ENCODE measurements at regions of chr1 and their contacts with region 1.

Region 1: DNA sequence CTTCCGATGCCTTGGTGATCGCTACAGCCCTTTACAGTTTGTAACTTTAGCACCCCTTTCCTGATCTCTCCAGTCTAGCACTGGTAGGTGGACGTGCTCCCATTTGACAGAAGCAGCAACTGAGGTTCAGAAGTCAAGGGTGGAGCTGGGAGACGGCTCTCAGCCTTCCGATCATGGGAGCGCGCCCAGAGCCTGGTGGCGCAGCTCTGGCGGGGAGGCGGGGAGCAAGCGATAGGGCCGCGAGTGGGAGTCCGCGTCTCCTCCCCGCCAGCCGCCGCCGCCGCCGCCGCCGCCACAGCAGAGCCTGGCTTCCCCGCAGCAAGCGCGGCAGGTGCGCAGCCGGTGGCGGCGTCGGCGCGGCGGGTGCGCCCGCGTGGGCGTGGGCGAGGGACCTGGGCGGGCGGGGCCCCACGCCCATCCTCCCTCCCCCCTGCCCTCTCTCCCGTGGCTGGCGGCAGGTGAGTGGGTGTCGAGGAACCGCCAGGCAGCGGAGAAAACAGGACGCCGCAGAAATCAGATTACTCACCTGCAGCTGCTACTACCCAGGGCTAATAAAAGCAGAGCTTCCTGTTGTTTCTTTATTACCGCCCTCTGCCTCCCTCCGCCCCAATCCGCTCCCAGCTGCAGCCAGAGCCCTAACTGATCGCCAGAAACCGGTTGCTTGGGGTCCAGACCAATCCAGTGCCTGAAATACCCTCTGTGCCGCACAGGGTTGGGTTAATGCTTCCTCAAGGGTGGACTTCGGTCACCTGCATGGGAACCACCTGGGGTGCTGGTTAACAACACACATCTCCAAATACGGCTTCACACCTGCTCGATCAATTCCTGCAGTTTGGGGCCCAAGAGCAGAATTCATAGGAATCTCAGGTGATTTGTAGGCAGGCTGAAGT is 60.2 kb upstream of the ID3 start:
- DNase-seq: peak; percentile 87 to 94 (median 90)
- H3K4me3 ChIP-seq: peak overlapping the region; percentile 47 to 58
- H3K4me3 Mint-ChIP-seq: peak overlapping the region; percentile 81 to 88 (median 84)
- H3K27ac ChIP-seq: peak overlapping the region; percentile 65
- H3K27ac Mint-ChIP-seq: peak overlapping the region; percentile 92 to 98 (median 95)
- H3K4me1 ChIP-seq: peaks cover 88% of the 10 kb centered on the region
- H3K4me1 Mint-ChIP-seq: peaks cover 62 to 95% (median 77%) of the 10 kb centered on the region in 4 donors
- H3K27me3 ChIP-seq: no peaks in the 10 kb centered on the region
- H3K27me3 Mint-ChIP-seq: no peaks in the 10 kb centered on the region

Region 2: GRCh38 chr1:23344111-23344986 is 275.2 kb before region 1 on chr1 and contains the start of gene HNRNPR:
- CTCF ChIA-PET with region 1: no interaction called
- POLR2A ChIA-PET with region 1: no interaction called
- intact Hi-C with region 1: loop called (anchors 1 kb)
- DNase-seq: peak; percentile 96 to 99 (median 98)
- H3K4me3 ChIP-seq: peak within 1 kb of the TSS; percentile 79 to 89
- H3K4me3 Mint-ChIP-seq: peak within 1 kb of the TSS; percentile 92 to 99 (median 98)
- H3K27ac ChIP-seq: peak within 1 kb of the TSS; percentile 75
- H3K27ac Mint-ChIP-seq: peak within 1 kb of the TSS; percentile 93 to 99 (median 96)
- H3K4me1 ChIP-seq: peaks cover 42% of the 10 kb centered on the region
- H3K4me1 Mint-ChIP-seq: peaks cover 35 to 53% (median 42%) of the 10 kb centered on the region in 4 donors
- H3K27me3 ChIP-seq: no peaks in the 10 kb centered on the region
- H3K27me3 Mint-ChIP-seq: no peaks in the 10 kb centered on the region
- total RNA-seq, gene HNRNPR: 115 to 124 TPM

Region 3: GRCh38 chr1:23477344-23477743 is 142.2 kb before region 1 on chr1:
- CTCF ChIA-PET with region 1: no interaction called
- POLR2A ChIA-PET with region 1: no interaction called
- intact Hi-C with region 1: no loop called
- DNase-seq: no peak
- H3K4me3 ChIP-seq: no peak overlapping the region
- H3K4me3 Mint-ChIP-seq: no peak overlapping the region
- H3K27ac ChIP-seq: no peak overlapping the region
- H3K27ac Mint-ChIP-seq: no peak overlapping the region
- H3K4me1 ChIP-seq: no peaks in the 10 kb centered on the region
- H3K4me1 Mint-ChIP-seq: peaks cover 0 to 1% (median under 1%) of the 10 kb centered on the region in 4 donors
- H3K27me3 ChIP-seq: no peaks in the 10 kb centered on the region
- H3K27me3 Mint-ChIP-seq: peaks cover 3 to 8% of the 10 kb centered on the region in 2 donors

Region 4: DNA sequence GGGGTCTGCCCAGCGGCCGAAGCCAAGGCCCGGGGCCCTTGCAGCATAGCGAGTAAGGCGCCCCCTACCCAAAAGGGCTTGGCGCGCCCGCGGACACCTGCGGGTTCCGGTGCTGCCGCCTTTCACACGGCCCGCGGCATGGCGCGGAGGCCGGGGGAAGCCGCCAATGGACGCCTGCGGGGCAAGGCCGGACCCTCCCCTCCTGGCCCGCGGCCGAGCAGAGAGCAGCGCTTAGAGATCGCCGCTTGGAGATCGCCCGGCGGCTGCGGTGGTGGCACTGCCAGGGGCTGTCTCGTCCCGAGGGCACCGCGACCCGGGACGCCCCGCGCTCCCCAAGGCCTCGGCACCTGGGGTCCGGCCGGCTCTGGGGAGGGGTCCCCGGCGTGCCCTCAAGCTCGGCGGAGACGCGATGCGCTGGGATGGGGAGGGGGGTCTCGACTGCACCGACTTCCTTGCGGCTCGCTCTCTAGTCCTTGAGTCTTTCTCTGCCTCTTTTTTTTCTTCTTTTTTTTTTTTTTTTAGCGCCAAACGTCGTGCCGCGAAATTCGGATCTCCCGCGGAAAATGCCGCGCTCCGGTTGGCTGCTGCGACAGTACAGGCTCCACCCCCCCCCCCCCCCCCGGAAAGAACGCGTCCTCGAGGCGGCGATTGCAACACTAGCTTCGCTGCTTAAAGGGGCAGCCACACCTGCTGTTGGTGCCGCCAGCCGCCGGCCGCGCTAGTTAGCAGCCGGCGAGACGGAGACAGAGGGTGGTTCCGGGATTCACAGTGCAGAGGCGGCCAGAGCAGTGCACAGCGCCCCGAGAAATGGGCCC is 88.6 kb before region 1 on chr1 and contains the start of gene E2F2:
- CTCF ChIA-PET with region 1: interaction called, 6 read pairs
- POLR2A ChIA-PET with region 1: interaction called, 69 read pairs
- intact Hi-C with region 1: no loop called
- DNase-seq: peak; percentile 78 to 86 (median 82)
- H3K4me3 ChIP-seq: peak within 1 kb of the TSS; percentile 40 to 64
- H3K4me3 Mint-ChIP-seq: peak within 1 kb of the TSS; percentile 90 to 96 (median 92)
- H3K27ac ChIP-seq: peak within 1 kb of the TSS; percentile 60
- H3K27ac Mint-ChIP-seq: peak within 1 kb of the TSS; percentile 86 to 97 (median 94)
- H3K4me1 ChIP-seq: peaks cover 82% of the 10 kb centered on the region
- H3K4me1 Mint-ChIP-seq: peaks cover 58 to 90% (median 80%) of the 10 kb centered on the region in 4 donors
- H3K27me3 ChIP-seq: no peaks in the 10 kb centered on the region
- H3K27me3 Mint-ChIP-seq: no peaks in the 10 kb centered on the region
- total RNA-seq, gene E2F2: 1.1 to 1.2 TPM

Region 5: DNA sequence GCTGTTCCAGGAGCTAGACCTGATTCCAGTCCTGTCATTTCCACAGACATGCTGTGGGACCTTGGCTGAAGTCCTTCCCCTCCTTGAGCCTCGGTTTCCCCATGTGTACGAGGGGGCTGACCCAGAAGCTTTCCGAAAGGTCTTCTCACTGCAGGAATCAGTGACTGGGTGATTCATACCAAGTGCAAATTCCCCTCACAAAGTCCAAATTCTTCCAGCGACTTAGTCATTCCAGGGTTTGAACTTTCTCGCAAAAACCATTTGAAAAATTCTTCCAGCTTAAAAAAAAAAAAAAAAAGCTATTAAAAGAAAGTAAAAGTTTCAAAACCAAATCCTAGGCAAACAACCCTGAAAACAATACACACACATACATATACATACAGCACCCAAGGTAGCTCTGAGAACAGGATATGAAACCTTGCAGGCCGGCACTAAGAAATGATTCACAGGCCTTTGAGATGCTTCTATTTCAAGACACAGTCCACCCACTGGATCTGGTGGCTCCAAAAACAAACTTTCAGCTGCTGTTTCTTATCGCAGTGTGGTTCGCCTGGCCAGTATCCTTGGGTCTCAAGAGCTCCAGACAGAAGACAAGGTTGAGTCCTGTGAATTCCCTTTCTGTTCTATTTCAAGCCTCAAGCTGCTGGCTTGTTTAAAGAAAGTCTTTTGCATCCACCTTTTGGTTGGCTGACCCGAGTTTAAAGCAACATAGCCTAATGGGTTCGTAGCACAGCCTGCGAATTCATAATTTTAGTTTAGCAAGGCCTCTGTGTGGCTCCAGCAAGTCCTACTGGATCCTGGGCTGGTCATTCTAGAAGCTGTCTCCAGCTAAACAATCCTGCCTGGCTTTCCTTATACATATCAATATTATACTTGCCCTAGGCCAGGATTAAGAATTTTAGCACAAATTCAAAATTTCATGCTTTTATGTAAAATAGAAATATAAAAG is 42.2 kb before region 1 on chr1:
- CTCF ChIA-PET with region 1: interaction called, 4 read pairs
- POLR2A ChIA-PET with region 1: interaction called, 29 read pairs
- intact Hi-C with region 1: no loop called
- DNase-seq: no peak
- H3K4me3 ChIP-seq: no peak overlapping the region
- H3K4me3 Mint-ChIP-seq: peak overlapping the region in 3 of 8 donors; percentile 36 to 46 (median 38)
- H3K27ac ChIP-seq: no peak overlapping the region
- H3K27ac Mint-ChIP-seq: peak overlapping the region; percentile 4 to 86 (median 54)
- H3K4me1 ChIP-seq: peaks cover 25% of the 10 kb centered on the region
- H3K4me1 Mint-ChIP-seq: peaks cover 13 to 27% (median 20%) of the 10 kb centered on the region in 4 donors
- H3K27me3 ChIP-seq: no peaks in the 10 kb centered on the region
- H3K27me3 Mint-ChIP-seq: no peaks in the 10 kb centered on the region

Region 6: DNA sequence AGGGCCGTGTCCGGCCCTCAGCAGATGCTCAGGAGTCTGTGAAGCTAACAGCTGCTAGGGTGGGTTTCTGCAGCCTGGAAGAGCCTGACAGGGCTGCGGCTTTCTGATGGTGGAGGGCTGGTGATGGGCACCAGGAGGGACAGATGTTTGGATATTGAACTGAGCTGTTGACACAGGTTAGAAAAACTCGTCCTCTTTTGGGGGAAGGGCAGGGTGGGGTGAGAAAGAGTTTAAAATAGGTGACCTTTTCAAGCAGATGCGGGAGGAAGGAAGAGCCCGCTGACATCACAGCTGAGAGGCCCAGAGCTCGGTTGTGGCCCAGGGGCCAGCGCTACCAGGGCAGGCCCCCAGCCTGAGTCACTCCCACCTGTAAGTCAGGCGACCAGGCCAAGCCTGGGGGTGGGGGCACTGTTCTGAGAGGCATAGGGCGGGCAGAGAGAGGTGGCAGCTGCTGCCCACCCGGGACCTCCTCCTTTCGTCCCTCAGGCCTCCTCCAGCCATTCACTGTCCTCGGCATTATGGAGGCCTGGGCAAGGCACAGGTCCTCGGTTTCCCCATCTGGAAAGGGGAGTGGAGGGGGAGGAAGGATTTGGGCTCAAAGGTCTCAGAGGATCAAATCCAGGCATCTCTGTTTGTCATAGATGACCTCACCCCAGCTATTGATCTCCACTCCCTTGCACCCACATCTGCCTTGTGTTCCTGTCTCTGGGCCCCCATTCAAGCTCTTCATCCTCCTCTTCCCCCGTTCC is 27.9 kb before region 1 on chr1:
- CTCF ChIA-PET with region 1: interaction called, 8 read pairs
- POLR2A ChIA-PET with region 1: interaction called, 236 read pairs
- intact Hi-C with region 1: no loop called
- DNase-seq: no peak
- H3K4me3 ChIP-seq: no peak overlapping the region
- H3K4me3 Mint-ChIP-seq: peak overlapping the region in 6 of 8 donors; percentile 25 to 75 (median 64)
- H3K27ac ChIP-seq: no peak overlapping the region
- H3K27ac Mint-ChIP-seq: peak overlapping the region in 6 of 7 donors; percentile 82 to 90 (median 88)
- H3K4me1 ChIP-seq: peaks cover 54% of the 10 kb centered on the region
- H3K4me1 Mint-ChIP-seq: peaks cover 25 to 71% (median 52%) of the 10 kb centered on the region in 4 donors
- H3K27me3 ChIP-seq: no peaks in the 10 kb centered on the region
- H3K27me3 Mint-ChIP-seq: no peaks in the 10 kb centered on the region

Region 7: DNA sequence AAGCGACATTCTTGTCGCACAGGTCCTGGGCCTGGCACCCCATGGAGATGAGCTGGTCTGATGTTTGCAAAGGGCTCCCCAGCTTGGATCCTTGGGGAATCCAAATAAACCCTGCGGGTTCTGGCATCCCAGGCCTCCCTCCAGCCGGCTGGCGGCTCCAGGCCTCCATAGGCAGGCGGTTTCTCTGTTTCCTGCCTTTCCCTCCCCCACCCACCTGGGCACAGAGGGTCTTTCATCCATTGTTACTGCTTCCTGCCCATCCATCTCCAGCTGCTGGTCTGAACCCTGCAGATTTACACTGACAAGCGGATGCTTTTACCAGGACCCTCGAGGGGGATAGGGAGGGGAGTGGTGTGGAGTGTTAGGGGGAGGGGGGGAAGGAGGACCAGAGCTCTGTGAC is 21.1 kb before region 1 on chr1:
- CTCF ChIA-PET with region 1: interaction called, 13 read pairs
- POLR2A ChIA-PET with region 1: interaction called, 236 read pairs
- intact Hi-C with region 1: loop called (anchors 1 kb)
- DNase-seq: no peak
- H3K4me3 ChIP-seq: no peak overlapping the region
- H3K4me3 Mint-ChIP-seq: no peak overlapping the region
- H3K27ac ChIP-seq: no peak overlapping the region
- H3K27ac Mint-ChIP-seq: peak overlapping the region in 3 of 7 donors; percentile 25 to 88 (median 40)
- H3K4me1 ChIP-seq: peaks cover 90% of the 10 kb centered on the region
- H3K4me1 Mint-ChIP-seq: peaks cover 48 to 95% (median 80%) of the 10 kb centered on the region in 4 donors
- H3K27me3 ChIP-seq: no peaks in the 10 kb centered on the region
- H3K27me3 Mint-ChIP-seq: no peaks in the 10 kb centered on the region

Region 8: DNA sequence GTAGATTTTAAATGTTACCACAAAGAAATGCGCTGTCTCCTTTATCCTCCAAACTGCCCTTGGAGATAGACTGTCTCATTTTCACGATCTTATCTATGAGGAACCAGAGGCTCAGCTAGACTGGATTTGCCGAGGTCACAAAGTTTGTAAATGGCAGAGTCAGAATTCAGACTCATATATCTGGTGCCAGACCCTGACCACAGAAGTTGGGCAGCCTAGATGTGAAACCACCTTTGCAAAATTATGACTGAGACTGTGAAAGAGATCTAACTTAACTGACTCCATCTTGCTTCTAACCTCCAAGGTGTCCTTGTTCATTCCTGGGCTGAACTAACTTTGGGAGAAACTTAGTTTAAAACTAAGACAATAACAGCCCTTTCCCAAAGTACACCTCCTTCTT is 279.5 kb after region 1 on chr1:
- CTCF ChIA-PET with region 1: no interaction called
- POLR2A ChIA-PET with region 1: no interaction called
- intact Hi-C with region 1: no loop called
- DNase-seq: no peak
- H3K4me3 ChIP-seq: no peak overlapping the region
- H3K4me3 Mint-ChIP-seq: no peak overlapping the region
- H3K27ac ChIP-seq: no peak overlapping the region
- H3K27ac Mint-ChIP-seq: no peak overlapping the region
- H3K4me1 ChIP-seq: no peaks in the 10 kb centered on the region
- H3K4me1 Mint-ChIP-seq: peaks cover 7 to 17% (median 12%) of the 10 kb centered on the region in 4 donors
- H3K27me3 ChIP-seq: no peaks in the 10 kb centered on the region
- H3K27me3 Mint-ChIP-seq: peaks cover 7 to 19% of the 10 kb centered on the region in 2 donors